Psoas muscle (tissue), 8 donors: ENCODE measurements at regions of chr7 and their contacts with region 1.

Region 1: GRCh38 chr7:1503816-1504775 is at the start of gene INTS1:
- DNase-seq: peak; percentile 93 to 97
- ATAC-seq: peak; percentile 93 to 96 (median 94)
- H3K4me3 ChIP-seq: peak within 1 kb of the TSS; percentile 85
- H3K27ac ChIP-seq: peak within 1 kb of the TSS; percentile 83
- H3K4me1 ChIP-seq: peaks cover 21% of the 10 kb centered on the region
- H3K27me3 ChIP-seq: no peaks in the 10 kb centered on the region
- CTCF ChIP-seq: peak; percentile 87
- total RNA-seq, gene INTS1: 61.3 to 77.6 (median 68.9) TPM

Region 2: DNA sequence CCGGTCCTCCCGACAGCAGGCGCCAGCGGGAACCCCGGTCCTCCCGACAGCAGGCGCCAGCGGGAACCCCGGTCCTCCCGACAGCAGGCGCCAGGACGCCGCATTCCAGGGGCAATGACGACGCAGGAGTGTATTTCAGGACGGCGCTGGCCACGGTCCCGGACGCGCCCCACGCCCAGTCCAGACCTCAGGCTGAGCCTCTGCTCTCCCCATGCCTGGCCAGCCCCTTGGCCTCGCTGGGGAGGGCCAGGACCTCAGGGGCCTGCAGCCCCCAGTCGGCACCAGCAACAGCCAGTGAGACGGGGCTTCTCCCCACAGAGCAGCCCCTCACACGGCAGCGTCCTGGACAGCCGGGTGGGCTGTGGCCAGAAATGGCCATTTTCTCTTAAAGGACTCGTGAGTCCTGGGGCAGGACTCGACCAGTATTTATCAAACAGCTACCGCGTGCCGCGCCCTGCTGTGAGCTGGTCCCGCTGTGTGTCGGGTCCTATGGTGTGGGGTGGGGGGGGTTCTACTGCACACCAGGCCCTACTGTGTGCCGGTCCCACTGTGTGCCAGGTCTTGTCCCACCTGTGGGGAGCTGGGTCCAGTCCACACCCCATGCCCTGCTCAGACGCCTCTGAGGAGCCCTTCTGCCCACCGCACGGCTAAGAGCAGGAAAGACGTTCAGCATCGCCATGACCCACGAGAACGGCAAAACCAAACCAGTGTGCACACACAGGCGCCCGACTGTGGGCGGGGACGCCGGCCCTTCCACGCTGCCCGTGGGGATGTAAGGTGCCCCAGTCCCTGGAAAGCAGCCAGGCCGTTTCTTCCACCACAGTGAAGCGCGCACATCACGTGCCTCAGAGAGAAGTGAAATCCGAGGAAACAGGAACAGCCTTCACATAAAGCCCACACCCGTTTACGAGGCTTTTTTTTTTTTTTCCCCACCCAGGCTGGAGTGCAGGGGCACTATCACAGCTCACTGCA is 594.5 kb before region 1 on chr7:
- intact Hi-C with region 1: no loop called
- DNase-seq: peak; percentile 72 to 79
- ATAC-seq: peak in 3 of 4 donors; percentile 50 to 65 (median 59)
- H3K4me3 ChIP-seq: peak overlapping the region; percentile 51
- H3K27ac ChIP-seq: no peak overlapping the region
- H3K4me1 ChIP-seq: no peaks in the 10 kb centered on the region
- H3K27me3 ChIP-seq: peaks cover 0 to 33% (median 2%) of the 10 kb centered on the region in 3 donors
- CTCF ChIP-seq: no peak

Region 3: GRCh38 chr7:1460821-1461645 is 43.1 kb before region 1 on chr7:
- intact Hi-C with region 1: loop called in 1 of 2 experiments (anchors 5 kb)
- DNase-seq: peak; percentile 70 to 85
- ATAC-seq: peak; percentile 47 to 60 (median 50)
- H3K4me3 ChIP-seq: peak overlapping the region; percentile 74
- H3K27ac ChIP-seq: peak overlapping the region; percentile 75
- H3K4me1 ChIP-seq: peaks cover 20% of the 10 kb centered on the region
- H3K27me3 ChIP-seq: no peaks in the 10 kb centered on the region
- CTCF ChIP-seq: no peak

Region 4: DNA sequence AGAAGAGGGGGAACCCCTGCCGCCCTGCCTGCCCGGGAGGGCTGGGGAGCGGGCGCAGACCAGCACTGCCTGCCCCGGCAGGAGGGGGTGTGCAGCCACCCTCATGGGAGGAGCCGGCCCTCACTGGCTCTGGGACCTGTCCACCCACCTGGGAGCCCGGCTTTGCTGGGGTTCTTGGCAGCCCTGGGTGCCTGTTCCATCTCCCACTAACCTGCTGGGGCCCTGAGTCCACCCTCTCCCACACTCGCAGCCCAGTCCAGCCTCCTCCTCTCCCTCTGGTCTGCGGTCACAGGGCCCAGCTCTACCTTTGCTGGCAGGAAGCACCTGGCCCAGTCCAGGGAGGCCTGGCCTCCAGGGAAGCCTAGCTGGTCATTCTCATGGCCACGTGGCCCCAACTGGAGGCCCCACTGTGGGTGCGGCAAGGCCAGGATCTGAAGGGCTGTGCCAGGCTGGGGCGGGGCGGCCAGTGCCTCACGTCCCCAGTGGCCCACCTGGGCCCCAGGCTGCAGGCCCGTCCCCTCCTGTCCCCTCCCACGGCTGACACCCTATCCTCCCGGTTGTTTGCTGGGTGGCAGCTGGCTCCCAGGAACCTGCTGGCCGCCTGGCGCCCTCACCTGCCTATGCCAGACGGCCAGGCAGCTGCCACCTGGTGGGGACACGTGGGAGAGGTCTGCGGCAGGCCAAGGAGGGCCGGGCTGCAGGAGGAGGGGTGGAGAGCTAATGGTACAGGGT is 51.9 kb after region 1 on chr7 and contains the start of gene TMEM184A:
- intact Hi-C with region 1: loop called (anchors 1 to 2 kb)
- DNase-seq: peak; percentile 67 to 86
- ATAC-seq: peak; percentile 77 to 82 (median 81)
- H3K4me3 ChIP-seq: peak within 1 kb of the TSS; percentile 41
- H3K27ac ChIP-seq: peak within 1 kb of the TSS; percentile 90
- H3K4me1 ChIP-seq: peaks cover 13% of the 10 kb centered on the region
- H3K27me3 ChIP-seq: no peaks in the 10 kb centered on the region
- CTCF ChIP-seq: peak; percentile 40
- total RNA-seq, gene TMEM184A: 2.8 to 6.0 (median 2.9) TPM